Aorta (tissue), 5 donors: ENCODE measurements at regions of chr2 and their contacts with region 1.

Region 1: DNA sequence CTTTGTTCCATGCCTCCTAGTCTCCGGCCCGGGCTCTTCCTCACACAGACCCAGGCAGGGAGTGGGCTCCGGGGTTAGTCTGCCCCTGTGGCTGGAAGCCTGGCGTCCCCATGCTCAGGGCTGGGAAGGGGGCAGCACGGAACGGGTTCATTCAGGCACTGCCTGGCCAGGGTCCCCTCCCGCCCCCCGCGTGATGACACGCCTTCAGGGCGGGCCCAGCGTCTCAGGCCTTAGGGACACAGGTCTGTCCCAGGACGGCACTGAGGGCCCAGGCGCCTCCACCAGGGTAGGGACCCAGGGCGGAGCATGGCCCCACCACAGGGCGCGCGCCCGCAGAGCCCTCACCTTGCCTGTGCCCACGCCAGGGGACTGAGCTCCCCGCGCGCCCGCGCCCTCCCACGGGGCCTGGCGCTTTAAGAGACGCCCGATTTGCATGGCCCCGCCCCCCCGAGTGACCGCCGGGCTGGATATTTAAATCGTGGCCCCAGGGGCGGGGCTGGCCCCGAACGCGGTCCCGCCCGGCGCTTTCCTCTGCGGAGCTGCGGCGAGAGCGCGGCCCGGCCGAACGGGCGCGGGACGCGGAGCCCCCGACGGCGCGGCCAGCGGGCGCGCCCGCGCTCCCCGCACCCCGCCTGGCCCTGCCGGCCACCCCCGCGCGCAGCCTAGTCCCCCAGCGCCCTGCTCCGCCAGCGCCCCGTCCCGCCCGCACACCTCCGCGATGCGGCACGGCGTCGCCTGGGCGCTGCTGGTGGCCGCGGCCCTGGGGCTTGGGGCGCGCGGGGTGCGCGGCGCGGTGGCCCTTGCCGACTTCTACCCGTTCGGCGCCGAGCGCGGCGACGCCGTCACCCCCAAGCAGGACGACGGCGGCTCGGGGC is at the start of gene SNED1:
- DNase-seq: peak; percentile 95 to 96
- ATAC-seq: peak; percentile 85
- H3K4me3 ChIP-seq: peak within 1 kb of the TSS; percentile 83
- H3K27ac ChIP-seq: peak within 1 kb of the TSS; percentile 29 to 64
- H3K4me1 ChIP-seq: peaks cover 0 to 6% of the 10 kb centered on the region in 2 donors
- H3K27me3 ChIP-seq: no peaks in the 10 kb centered on the region
- total RNA-seq, gene SNED1: 108 to 149 TPM

Region 2: DNA sequence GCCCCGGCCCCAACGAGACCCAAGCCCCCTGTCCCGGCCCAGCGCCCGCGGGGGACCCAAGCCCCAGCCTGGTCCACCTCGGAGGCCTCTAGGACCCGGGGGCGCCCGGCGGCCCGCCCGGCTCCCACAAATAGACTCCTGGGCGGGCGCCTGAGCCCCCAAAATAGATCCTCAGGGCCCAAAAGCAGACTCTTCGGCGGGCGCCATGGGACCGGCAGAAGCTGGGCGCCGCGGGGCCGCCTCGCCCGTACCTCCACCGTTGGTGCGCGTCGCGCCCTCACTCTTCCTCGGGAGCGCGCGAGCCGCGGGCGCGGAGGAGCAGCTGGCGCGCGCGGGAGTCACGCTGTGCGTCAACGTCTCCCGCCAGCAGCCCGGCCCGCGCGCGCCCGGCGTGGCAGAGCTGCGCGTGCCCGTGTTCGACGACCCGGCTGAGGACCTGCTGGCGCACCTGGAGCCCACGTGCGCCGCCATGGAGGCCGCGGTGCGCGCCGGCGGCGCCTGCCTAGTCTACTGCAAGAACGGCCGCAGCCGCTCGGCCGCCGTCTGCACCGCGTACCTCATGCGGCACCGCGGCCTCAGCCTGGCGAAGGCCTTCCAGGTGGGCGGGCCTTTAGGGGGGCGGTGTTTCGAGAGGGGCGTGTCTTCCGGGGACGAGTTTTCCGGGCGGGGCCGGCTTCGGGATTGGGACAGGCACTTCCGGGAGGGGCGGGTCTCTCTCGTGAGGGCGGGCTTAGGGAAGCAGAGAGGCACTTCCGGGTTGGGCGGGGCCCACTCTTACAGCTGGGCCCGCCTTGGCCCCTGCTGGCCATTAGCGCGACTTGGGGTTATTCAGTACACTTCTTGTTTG is 437.7 kb before region 1 on chr2:
- intact Hi-C with region 1: loop called in 1 of 2 experiments (anchors 10 kb)
- DNase-seq: peak; percentile 100
- ATAC-seq: peak; percentile 94
- H3K4me3 ChIP-seq: peak overlapping the region; percentile 67 to 71
- H3K27ac ChIP-seq: peak overlapping the region; percentile 83 to 87
- H3K4me1 ChIP-seq: peaks cover 0 to under 1% of the 10 kb centered on the region in 2 donors
- H3K27me3 ChIP-seq: no peaks in the 10 kb centered on the region

Region 3: GRCh38 chr2:240962300-240963064 is 35.9 kb before region 1 on chr2:
- intact Hi-C with region 1: no loop called
- DNase-seq: peak; percentile 82
- ATAC-seq: peak; percentile 37
- H3K4me3 ChIP-seq: no peak overlapping the region
- H3K27ac ChIP-seq: no peak overlapping the region
- H3K4me1 ChIP-seq: no peaks in the 10 kb centered on the region
- H3K27me3 ChIP-seq: no peaks in the 10 kb centered on the region

Region 4: DNA sequence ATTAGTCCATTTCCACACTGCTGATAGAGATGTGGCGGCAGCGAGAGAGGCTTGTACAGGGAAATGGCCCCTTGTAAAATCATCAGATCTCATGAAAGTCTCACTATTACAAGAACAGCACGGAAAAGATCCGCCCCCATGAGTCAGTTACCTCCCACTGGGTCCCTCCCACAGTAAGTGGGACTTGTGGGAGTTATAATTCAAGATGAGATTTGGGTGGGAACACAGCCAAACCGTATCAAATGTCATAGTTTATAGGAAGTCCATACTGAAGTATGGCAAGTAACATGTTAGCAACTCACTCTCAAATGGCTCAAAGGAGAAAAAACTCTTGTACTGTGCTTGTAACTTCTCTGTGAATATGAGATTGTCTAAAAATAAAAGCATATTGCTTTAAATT is 413.8 kb after region 1 on chr2:
- intact Hi-C with region 1: no loop called
- DNase-seq: no peak
- ATAC-seq: no peak
- H3K4me3 ChIP-seq: no peak overlapping the region
- H3K27ac ChIP-seq: no peak overlapping the region
- H3K4me1 ChIP-seq: no peaks in the 10 kb centered on the region
- H3K27me3 ChIP-seq: no peaks in the 10 kb centered on the region